ENCODE measurements at regions of chrX and their contacts with region 1.

Region 1: GRCh38 chrX:10597871-10598270 is 22.5 kb downstream of the MID1 start:
- DNase-seq: peak; percentile 63
- H3K4me3 ChIP-seq: no peak overlapping the region
- H3K27ac ChIP-seq: no peak overlapping the region
- H3K4me1 ChIP-seq: no peaks in the 10 kb centered on the region
- H3K27me3 ChIP-seq: no peaks in the 10 kb centered on the region
- CTCF ChIP-seq: peak; percentile 46 to 63
- POLR2A ChIP-seq: no peak

Region 2: DNA sequence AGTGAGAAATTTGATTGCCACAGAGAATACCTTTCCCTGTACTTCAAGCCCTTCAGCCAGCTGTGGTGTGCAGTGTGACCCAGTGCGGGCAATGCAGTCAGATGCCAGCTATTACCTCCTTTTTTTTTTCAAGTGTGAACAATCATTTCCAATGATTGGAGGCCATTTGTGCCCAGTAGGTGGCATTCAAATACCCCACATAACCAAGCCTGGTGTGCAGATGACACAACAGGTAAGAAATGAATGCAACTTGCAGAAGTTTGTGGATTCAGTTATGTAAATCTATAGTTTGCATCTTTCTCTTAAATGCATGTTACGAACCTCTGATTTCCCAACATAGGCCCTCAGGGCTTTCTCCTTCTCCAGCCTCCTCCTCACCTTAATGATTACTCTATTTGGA is 343.1 kb before region 1 on chrX:
- CTCF ChIA-PET with region 1: interaction called, 4 read pairs
- POLR2A ChIA-PET with region 1: no interaction called
- dilution Hi-C with region 1: no loop called
- intact Hi-C with region 1: loop called (anchors 5 kb)
- DNase-seq: peak; percentile 3
- H3K4me3 ChIP-seq: no peak overlapping the region
- H3K27ac ChIP-seq: no peak overlapping the region
- H3K4me1 ChIP-seq: no peaks in the 10 kb centered on the region
- H3K27me3 ChIP-seq: no peaks in the 10 kb centered on the region
- CTCF ChIP-seq: no peak
- POLR2A ChIP-seq: no peak

Region 3: GRCh38 chrX:10444205-10444604 is 153.7 kb before region 1 on chrX:
- CTCF ChIA-PET with region 1: interaction called, 34 read pairs
- POLR2A ChIA-PET with region 1: no interaction called
- dilution Hi-C with region 1: no loop called
- intact Hi-C with region 1: loop called (anchors 2 kb)
- DNase-seq: peak; percentile 4
- H3K4me3 ChIP-seq: no peak overlapping the region
- H3K27ac ChIP-seq: no peak overlapping the region
- H3K4me1 ChIP-seq: peaks cover 2% of the 10 kb centered on the region
- H3K27me3 ChIP-seq: no peaks in the 10 kb centered on the region
- CTCF ChIP-seq: peak; percentile 11 to 17
- POLR2A ChIP-seq: no peak

Region 4: DNA sequence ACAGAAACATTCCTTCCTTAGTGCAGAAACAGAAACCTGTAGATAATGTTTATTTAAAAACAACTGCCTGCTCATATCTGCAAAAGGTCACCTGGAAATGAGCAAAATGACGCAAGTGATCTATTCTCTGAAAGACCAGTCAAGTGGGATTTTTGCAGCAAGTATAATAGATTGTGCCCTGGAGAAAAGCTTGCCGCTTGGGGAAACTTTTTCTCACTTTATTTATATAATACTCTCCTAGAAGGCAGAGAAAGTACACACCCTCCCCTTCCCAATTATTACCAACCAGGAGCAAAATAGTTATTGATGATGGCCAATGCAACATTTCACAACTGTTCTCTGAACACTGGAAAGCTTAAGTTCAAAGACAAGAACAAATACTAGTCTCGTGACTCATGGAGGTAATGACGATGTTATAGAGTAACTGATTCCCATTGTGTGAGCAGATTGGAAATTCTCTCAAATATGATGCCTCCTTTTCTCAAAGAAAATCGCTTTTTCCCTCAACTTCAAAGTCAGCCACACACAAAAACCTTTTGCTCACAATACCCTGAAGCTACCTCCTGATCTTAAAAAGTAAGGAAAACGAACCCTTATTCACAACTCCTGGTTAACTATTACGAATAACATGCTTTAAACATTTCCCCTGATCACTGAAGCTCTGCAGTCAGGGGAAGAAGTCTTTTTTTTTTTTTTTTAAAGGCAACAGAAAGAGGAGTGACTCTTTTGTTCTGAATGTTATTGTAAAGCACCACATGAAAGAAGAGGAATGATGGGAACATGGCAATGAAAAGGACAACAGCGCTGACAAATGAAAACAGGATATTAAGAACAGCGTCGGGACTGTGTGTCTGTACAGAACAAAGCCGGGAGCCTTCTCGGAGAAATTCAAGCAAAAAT is 18.5 kb before region 1 on chrX:
- CTCF ChIA-PET with region 1: interaction called, 11 read pairs
- POLR2A ChIA-PET with region 1: no interaction called
- dilution Hi-C with region 1: no loop called
- intact Hi-C with region 1: no loop called
- DNase-seq: peak; percentile 84
- H3K4me3 ChIP-seq: peak overlapping the region in 1 of 3 experiments; percentile 59
- H3K27ac ChIP-seq: peak overlapping the region; percentile 99
- H3K4me1 ChIP-seq: peaks cover 58% of the 10 kb centered on the region
- H3K27me3 ChIP-seq: no peaks in the 10 kb centered on the region
- CTCF ChIP-seq: no peak
- POLR2A ChIP-seq: no peak

Measured in endothelial cell of umbilical vein (primary cell).